ENCODE measurements at regions of chr9 and their contacts with region 1.

Region 1: DNA sequence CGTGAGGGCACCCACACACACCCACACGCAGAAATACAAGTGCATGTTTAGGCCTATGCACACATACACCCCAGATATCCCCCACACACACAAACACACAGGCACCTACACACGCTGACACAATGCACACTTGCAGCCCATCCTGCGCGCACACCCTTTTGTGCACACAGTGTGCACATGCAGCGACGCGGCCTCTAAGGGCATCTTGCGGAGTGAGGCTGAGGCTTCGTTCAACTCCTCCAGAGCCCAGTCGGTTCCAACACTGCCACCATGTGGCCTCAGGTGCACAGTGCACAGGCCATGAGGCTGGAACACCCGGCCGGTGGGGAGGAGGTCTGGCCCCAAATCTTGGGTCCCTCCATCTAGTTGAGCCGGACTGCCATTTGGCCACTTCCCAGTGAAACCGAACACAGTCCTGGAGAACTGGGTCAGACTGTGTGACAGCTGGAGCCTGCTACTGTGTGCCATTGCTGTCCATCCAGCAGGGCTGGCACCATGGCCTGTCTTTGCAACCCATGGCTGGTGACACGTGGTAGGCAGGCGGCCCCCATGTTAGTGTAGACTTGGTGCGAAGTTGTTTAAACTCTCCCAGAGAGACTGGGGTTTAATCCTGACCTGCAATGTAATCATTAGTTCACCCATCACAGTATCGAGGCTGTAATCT is 97.7 kb upstream of the MVB12B start:
- DNase-seq: peak; percentile 53
- ATAC-seq: peak; percentile 99
- H3K4me3 ChIP-seq: no peak overlapping the region
- H3K27ac ChIP-seq: no peak overlapping the region
- H3K4me1 ChIP-seq: no peaks in the 10 kb centered on the region
- H3K27me3 ChIP-seq: 0 out of 2 replicates have a peak, but pooled peaks cover 3% of the 10 kb centered on the region
- CTCF ChIP-seq: peak; percentile 88 to 96 (median 95)
- POLR2A ChIP-seq: no peak
- RAD21 ChIP-seq: peak; percentile 95

Region 2: GRCh38 chr9:125428060-125428901 is 800.6 kb before region 1 on chr9:
- CTCF ChIA-PET with region 1: no interaction called
- POLR2A ChIA-PET with region 1: no interaction called
- RAD21 ChIA-PET with region 1: no interaction called
- intact Hi-C with region 1: loop called (anchors 5 kb)
- DNase-seq: peak; percentile 28
- ATAC-seq: peak; percentile 84
- H3K4me3 ChIP-seq: peak overlapping the region; percentile 23 to 51
- H3K27ac ChIP-seq: peak overlapping the region; percentile 37
- H3K4me1 ChIP-seq: peaks cover 7 to 25% of the 10 kb centered on the region in 2 experiments; a peak in 3 of 4 replicates
- H3K27me3 ChIP-seq: no peaks in the 10 kb centered on the region
- CTCF ChIP-seq: peak; percentile 83 to 93 (median 88)
- POLR2A ChIP-seq: no peak
- RAD21 ChIP-seq: peak; percentile 93

Region 3: DNA sequence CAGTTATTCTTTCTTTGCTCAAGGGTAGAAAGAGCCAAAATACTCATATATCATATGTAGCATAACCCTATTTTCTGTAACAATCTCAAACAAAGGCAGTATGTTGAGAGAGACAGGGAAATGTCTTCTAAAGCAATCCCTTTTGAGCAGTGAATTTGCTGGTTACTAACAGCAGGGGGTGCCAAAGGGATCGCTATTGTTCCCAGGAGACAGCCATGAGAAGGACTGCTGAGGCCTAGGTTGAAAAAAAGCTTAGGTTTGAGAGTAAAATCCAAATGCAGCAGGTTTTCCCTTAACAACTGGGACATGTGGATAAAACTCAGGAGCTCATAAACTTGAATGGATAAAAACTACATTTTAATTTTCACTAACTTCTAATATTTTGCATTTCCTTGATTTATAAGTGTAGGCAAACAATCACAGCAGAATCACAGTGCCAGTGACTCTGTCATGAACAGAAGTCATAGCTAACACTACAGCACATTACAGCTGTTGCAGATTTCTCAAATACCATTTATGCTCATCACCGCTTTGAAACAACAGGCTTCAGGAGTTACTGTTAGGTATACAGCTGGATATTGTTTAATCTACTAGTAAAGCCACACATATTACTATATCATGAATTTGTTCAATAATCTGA is 670.3 kb before region 1 on chr9:
- CTCF ChIA-PET with region 1: no interaction called
- POLR2A ChIA-PET with region 1: no interaction called
- RAD21 ChIA-PET with region 1: no interaction called
- intact Hi-C with region 1: loop called (anchors 1 kb)
- DNase-seq: peak; percentile 50
- ATAC-seq: peak; percentile 93
- H3K4me3 ChIP-seq: no peak overlapping the region
- H3K27ac ChIP-seq: no peak overlapping the region
- H3K4me1 ChIP-seq: no peaks in the 10 kb centered on the region
- H3K27me3 ChIP-seq: no peaks in the 10 kb centered on the region
- CTCF ChIP-seq: peak; percentile 60 to 81 (median 81)
- POLR2A ChIP-seq: no peak
- RAD21 ChIP-seq: peak; percentile 86

Region 4: GRCh38 chr9:125746017-125746773 is 482.7 kb before region 1 on chr9:
- CTCF ChIA-PET with region 1: no interaction called
- POLR2A ChIA-PET with region 1: no interaction called
- RAD21 ChIA-PET with region 1: no interaction called
- intact Hi-C with region 1: loop called (anchors 10 kb)
- DNase-seq: peak; percentile 91
- ATAC-seq: peak; percentile 90
- H3K4me3 ChIP-seq: peak overlapping the region; percentile 22 to 44; a peak in 3 of 4 replicates
- H3K27ac ChIP-seq: peak overlapping the region; percentile 69
- H3K4me1 ChIP-seq: peaks cover 3 to 23% of the 10 kb centered on the region in 2 experiments; a peak in 3 of 4 replicates
- H3K27me3 ChIP-seq: no peaks in the 10 kb centered on the region
- CTCF ChIP-seq: no peak
- POLR2A ChIP-seq: no peak
- RAD21 ChIP-seq: no peak

Measured in HCT116 (cell line).